PC-9 (cell line): ENCODE measurements at regions of chr3 and their contacts with region 1.

Region 1: DNA sequence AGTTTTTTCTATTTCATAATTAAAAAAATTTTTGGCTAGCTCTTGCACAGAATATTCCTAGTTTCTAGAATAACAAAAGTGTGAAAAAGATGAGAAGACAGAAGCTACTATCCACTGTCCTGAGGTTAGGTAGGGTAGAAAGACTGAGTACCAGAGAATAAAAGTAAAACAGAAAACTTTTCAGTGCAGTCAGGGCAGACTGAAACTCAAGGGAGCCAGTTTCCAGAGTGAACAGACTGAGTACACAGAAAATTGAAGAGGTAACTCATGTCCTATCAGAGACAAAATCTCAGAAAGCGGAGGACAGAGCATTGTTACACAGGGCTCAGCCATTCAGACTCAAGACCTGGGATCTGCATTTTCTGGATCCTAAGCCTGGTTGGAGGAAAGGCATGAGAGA is 8.8 kb upstream of the FBXO40 start:
- DNase-seq: no peak
- H3K4me3 ChIP-seq: no peak overlapping the region
- H3K27ac ChIP-seq: no peak overlapping the region
- H3K4me1 ChIP-seq: no peaks in the 10 kb centered on the region
- H3K27me3 ChIP-seq: no peaks in the 10 kb centered on the region
- CTCF ChIP-seq: no peak

Region 2: DNA sequence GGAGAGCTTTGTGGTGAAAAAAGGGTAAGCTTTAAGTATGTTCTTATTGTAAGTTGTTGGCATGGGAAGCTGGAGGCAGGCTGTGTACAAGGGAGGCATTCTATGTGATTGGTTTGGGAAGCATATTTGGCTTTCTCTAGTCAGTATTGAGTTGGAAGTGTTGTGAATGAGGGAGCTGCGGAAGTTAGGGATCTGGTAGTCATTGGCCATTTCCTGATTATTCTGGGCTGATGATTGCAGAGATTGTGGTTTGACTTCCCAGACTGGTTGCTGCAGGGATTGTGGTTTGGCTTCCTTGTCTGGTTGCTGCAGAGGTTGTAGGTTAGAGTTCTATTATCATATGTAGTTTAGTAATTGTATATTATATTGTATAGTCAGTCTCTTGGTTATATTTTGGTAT is 655.4 kb before region 1 on chr3:
- CTCF ChIA-PET with region 1: no interaction called
- POLR2A ChIA-PET with region 1: no interaction called
- intact Hi-C with region 1: no loop called
- DNase-seq: no peak
- H3K4me3 ChIP-seq: no peak overlapping the region
- H3K27ac ChIP-seq: no peak overlapping the region
- H3K4me1 ChIP-seq: no peaks in the 10 kb centered on the region
- H3K27me3 ChIP-seq: no peaks in the 10 kb centered on the region
- CTCF ChIP-seq: no peak

Region 3: GRCh38 chr3:121232309-121233225 is 351.9 kb before region 1 on chr3:
- CTCF ChIA-PET with region 1: no interaction called
- POLR2A ChIA-PET with region 1: no interaction called
- intact Hi-C with region 1: no loop called
- DNase-seq: no peak
- H3K4me3 ChIP-seq: no peak overlapping the region
- H3K27ac ChIP-seq: no peak overlapping the region
- H3K4me1 ChIP-seq: no peaks in the 10 kb centered on the region
- H3K27me3 ChIP-seq: no peaks in the 10 kb centered on the region
- CTCF ChIP-seq: no peak

Region 4: DNA sequence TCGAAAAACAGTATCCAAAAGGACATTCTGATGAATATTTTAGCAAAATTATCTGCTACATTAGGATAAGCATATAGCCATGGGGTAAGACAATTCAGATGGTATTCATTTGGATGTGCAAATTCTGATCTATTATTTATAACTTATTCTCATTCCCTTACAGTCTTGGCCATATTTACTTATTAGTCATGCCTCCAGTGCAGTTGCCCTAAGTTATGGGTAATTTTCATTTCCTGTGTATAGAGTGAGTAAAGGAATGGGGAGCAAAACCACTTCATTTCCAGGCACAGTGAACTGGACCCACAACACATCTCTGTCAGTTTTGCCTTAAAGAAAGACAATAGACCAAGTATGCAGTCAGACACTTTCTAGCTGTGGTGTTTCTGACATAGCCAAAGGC is 172.9 kb before region 1 on chr3:
- CTCF ChIA-PET with region 1: no interaction called
- POLR2A ChIA-PET with region 1: no interaction called
- intact Hi-C with region 1: no loop called
- DNase-seq: no peak
- H3K4me3 ChIP-seq: no peak overlapping the region
- H3K27ac ChIP-seq: no peak overlapping the region
- H3K4me1 ChIP-seq: no peaks in the 10 kb centered on the region
- H3K27me3 ChIP-seq: no peaks in the 10 kb centered on the region
- CTCF ChIP-seq: no peak

Region 5: DNA sequence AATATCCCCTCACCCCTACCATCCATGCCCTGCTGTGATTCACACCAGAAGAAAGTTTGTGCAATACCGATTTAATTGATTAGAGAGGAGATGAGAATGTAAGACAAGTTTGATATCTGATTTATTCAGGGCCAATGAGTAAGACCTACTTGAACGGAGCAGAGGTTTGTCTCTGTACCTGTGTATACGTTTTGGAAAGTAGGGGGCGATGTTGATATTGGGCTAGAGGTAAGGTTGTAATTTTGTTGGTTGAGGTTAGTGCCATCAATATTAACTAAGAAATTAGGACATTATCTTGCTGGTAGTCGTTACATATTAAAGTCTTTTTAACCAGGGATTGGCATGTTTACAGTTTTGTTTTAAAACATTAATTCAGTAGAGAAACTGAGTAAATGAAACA is 271.1 kb after region 1 on chr3:
- CTCF ChIA-PET with region 1: interaction called, 13 read pairs
- POLR2A ChIA-PET with region 1: no interaction called
- intact Hi-C with region 1: no loop called
- DNase-seq: no peak
- H3K4me3 ChIP-seq: no peak overlapping the region
- H3K27ac ChIP-seq: no peak overlapping the region
- H3K4me1 ChIP-seq: no peaks in the 10 kb centered on the region
- H3K27me3 ChIP-seq: no peaks in the 10 kb centered on the region
- CTCF ChIP-seq: peak; percentile 56